ENCODE measurements at regions of chr7 and their contacts with region 1.

Region 1: DNA sequence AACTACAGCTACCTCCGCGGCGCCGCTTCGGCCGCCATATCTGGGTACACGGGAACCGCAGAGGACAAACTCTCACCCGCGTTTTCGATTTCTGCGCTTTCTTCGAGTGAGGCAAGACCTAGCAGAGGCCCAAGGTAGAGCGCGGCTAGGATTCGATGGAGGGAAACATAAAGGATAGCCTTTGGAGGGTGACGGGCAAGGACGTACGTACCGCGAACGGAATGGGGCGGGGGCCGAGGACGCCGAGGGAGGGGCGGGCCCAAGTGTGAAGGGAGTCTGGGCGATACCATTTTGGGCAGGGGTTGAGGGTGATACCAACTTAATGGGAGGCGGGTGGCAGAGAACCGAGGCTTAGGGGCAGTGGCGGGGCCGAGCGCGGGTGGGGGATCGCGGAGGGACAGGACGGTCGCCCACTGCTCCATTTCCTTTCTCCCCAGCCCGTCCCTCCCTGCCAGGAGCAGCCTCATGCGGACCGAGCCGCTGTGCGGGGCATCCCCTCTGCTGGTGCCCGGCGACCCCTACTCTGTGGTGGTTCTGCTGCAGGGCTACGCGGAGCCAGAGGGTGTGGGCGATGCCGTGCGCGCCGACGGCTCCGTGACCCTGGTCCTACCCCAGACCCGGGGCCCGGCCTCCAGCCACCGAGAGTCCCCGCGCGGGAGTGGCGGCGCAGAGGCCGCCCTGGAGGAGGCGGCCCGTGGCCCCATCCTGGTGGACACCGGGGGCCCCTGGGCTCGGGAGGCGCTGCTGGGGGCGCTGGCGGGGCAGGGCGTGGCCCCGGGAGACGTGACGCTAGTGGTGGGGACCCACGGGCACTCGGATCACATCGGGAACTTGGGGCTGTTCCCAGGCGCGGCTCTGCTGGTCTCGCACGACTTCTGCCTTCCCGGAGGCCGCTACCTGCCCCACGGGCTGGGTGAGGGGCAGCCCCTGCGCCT is at the start of gene MBLAC1:
- DNase-seq: peak; percentile 94 to 97 (median 97)
- H3K4me3 ChIP-seq: peak within 1 kb of the TSS; percentile 62 to 97 (median 84)
- H3K27ac ChIP-seq: peak within 1 kb of the TSS; percentile 93 to 98
- H3K4me1 ChIP-seq: peaks cover 0 to 35% (median 26%) of the 10 kb centered on the region in 4 experiments
- H3K27me3 ChIP-seq: no peaks in the 10 kb centered on the region

Region 2: GRCh38 chr7:100221231-100221718 is 94.1 kb after region 1 on chr7:
- CTCF ChIA-PET with region 1: interaction called, 127 read pairs
- POLR2A ChIA-PET with region 1: no interaction called
- DNase-seq: peak in 2 of 3 donors; percentile 9 to 28
- H3K4me3 ChIP-seq: no peak overlapping the region
- H3K27ac ChIP-seq: peak overlapping the region in 1 of 2 experiments; percentile 68
- H3K4me1 ChIP-seq: peaks cover 0 to 3% (median 1%) of the 10 kb centered on the region in 4 experiments
- H3K27me3 ChIP-seq: no peaks in the 10 kb centered on the region

Region 3: DNA sequence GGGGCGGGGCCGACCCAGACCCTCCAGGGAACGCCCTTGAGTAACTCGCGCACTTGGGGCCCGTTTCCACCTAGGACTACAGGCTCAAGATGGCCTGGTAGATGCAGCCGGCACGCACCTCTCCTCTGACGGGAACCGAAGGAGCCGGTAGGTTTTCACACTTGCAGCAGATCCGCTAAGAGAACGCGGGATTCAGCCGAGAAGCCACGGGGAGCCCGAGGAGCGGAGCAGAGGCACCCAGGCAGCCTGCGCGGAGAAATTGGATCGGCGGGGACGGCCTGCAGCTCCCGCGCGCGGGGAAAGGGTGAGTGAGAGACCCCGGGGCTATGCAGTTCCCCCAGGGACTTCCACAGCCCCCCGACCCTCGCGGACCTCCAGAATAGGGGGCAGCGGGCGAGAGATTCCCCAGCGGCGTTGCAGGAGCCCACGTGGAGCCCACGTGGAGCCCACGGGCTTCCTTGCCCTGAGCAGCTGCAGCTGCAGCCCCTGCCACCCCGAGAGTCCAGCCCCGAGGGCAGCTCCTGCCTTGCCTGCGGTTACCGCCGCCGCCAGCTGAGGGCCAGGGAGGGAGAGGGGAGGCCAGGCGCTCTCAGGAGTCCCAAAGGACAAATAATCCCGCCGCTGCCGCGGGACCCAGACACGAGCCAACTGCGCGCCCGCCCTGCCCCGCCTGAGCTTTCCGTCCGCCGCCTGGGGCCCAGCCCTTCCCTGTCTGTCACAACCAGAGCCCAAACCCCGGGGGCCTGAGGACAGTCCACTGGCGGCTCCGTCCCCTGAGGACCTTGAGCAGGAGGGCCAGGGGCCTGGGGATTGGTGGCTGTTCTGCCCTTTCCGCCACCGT is 1181.3 kb after region 1 on chr7:
- CTCF ChIA-PET with region 1: no interaction called
- POLR2A ChIA-PET with region 1: no interaction called
- DNase-seq: peak in 2 of 3 donors; percentile 49 to 65
- H3K4me3 ChIP-seq: peak overlapping the region in 5 of 7 experiments; percentile 5 to 61 (median 45)
- H3K27ac ChIP-seq: no peak overlapping the region
- H3K4me1 ChIP-seq: peaks cover 0 to 11% (median 8%) of the 10 kb centered on the region in 4 experiments
- H3K27me3 ChIP-seq: peaks cover 3 to 59% (median 21%) of the 10 kb centered on the region in 5 experiments

Measured in common myeloid progenitor, CD34-positive (primary cell).